RWPE1 (cell line): ENCODE measurements at regions of chr7 and their contacts with region 1.

Region 1: GRCh38 chr7:4133491-4134044 is 548.5 kb upstream of the FOXK1 start:
- DNase-seq: no peak
- H3K27ac ChIP-seq: no peak overlapping the region
- CTCF ChIP-seq: no peak

Region 2: GRCh38 chr7:4115941-4116610 is 17.5 kb before region 1 on chr7:
- CTCF ChIA-PET with region 1: no interaction called
- POLR2A ChIA-PET with region 1: no interaction called
- DNase-seq: no peak
- H3K27ac ChIP-seq: no peak overlapping the region
- CTCF ChIP-seq: no peak

Region 3: GRCh38 chr7:4151926-4152549 is 18.5 kb after region 1 on chr7:
- CTCF ChIA-PET with region 1: interaction called, 10 read pairs
- POLR2A ChIA-PET with region 1: no interaction called
- DNase-seq: no peak
- H3K27ac ChIP-seq: no peak overlapping the region
- CTCF ChIP-seq: no peak

Region 4: GRCh38 chr7:4177001-4177400 is 43.4 kb after region 1 on chr7:
- CTCF ChIA-PET with region 1: no interaction called
- POLR2A ChIA-PET with region 1: no interaction called
- DNase-seq: no peak
- H3K27ac ChIP-seq: no peak overlapping the region
- CTCF ChIP-seq: no peak